ENCODE measurements at regions of chr1 and their contacts with region 1.

Region 1: GRCh38 chr1:51192213-51192843 is 43.7 kb upstream of the RNF11 start:
- DNase-seq: peak in 8 of 9 experiments; percentile 24 to 67 (median 56)
- ATAC-seq: no peak
- H3K4me3 ChIP-seq: no peak overlapping the region
- H3K4me3 Mint-ChIP-seq: no peak overlapping the region
- H3K27ac ChIP-seq: no peak overlapping the region
- H3K27ac Mint-ChIP-seq: no peak overlapping the region
- H3K4me1 ChIP-seq: no peaks in the 10 kb centered on the region
- H3K4me1 Mint-ChIP-seq: no peaks in the 10 kb centered on the region
- H3K27me3 ChIP-seq: no peaks in the 10 kb centered on the region
- H3K27me3 Mint-ChIP-seq: peaks cover 6% of the 10 kb centered on the region
- CTCF ChIP-seq: peak; percentile 82

Region 2: DNA sequence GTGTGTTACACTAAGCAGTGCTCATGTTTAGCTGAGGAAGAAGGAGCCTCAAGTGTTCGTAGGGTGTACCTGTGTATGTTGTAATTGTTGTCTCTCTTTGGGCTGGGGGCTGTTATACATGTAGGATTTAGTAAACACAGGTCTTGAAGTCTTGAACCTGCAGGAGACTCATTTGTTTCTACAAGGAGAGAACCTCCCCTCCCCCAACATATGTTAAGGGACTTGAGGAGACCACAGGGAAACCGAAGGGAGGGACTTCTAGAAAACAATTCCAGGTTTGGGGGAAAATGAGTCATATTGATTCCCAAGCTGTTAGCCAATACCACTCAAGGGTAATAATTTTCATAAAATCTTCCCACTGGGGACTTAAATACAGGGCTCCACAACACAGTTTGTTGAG is 1143.5 kb before region 1 on chr1:
- CTCF ChIA-PET with region 1: no interaction called
- POLR2A ChIA-PET with region 1: no interaction called
- intact Hi-C with region 1: no loop called
- DNase-seq: no peak
- ATAC-seq: no peak
- H3K4me3 ChIP-seq: no peak overlapping the region
- H3K4me3 Mint-ChIP-seq: no peak overlapping the region
- H3K27ac ChIP-seq: no peak overlapping the region
- H3K27ac Mint-ChIP-seq: no peak overlapping the region
- H3K4me1 ChIP-seq: no peaks in the 10 kb centered on the region
- H3K4me1 Mint-ChIP-seq: no peaks in the 10 kb centered on the region
- H3K27me3 ChIP-seq: peaks cover 0 to 3% of the 10 kb centered on the region in 2 experiments
- H3K27me3 Mint-ChIP-seq: peaks cover 36% of the 10 kb centered on the region
- CTCF ChIP-seq: no peak

Region 3: DNA sequence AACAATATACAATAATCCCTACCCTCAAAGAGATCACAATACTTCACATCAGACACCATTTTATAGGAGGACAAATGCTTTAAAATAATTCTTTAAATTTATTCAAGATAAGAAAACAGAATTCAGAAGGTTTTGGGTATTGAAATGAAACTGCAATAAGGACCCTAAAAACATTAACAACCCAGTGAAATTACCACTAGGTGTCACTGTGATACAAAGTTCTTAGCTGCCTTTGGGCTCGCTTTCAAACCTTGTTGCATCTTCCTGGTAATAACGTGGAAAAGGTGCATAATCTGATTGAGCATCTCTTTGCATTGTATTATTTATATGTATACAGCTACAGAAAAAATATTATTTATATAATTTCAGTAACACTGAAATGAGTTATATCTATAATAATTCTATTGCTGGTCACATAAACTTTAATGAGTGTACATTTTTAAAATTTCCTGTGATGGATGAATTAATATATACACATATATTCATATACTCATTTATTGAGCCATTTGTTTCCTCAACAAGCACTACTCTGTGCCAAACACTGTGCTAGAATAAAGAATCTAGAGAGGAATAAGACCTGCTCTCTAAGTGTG is 417.5 kb before region 1 on chr1:
- CTCF ChIA-PET with region 1: interaction called, 108 read pairs
- POLR2A ChIA-PET with region 1: no interaction called
- intact Hi-C with region 1: loop called (anchors 1 kb)
- DNase-seq: peak in 3 of 9 experiments; percentile 7 to 68 (median 55)
- ATAC-seq: no peak
- H3K4me3 ChIP-seq: no peak overlapping the region
- H3K4me3 Mint-ChIP-seq: no peak overlapping the region
- H3K27ac ChIP-seq: no peak overlapping the region
- H3K27ac Mint-ChIP-seq: no peak overlapping the region
- H3K4me1 ChIP-seq: no peaks in the 10 kb centered on the region
- H3K4me1 Mint-ChIP-seq: peaks cover 7% of the 10 kb centered on the region
- H3K27me3 ChIP-seq: no peaks in the 10 kb centered on the region
- H3K27me3 Mint-ChIP-seq: no peaks in the 10 kb centered on the region
- CTCF ChIP-seq: peak; percentile 83

Region 4: GRCh38 chr1:50929376-50929958 is 262.9 kb before region 1 on chr1:
- CTCF ChIA-PET with region 1: interaction called, 44 read pairs
- POLR2A ChIA-PET with region 1: no interaction called
- intact Hi-C with region 1: loop called in 1 of 2 experiments (anchors 1 kb)
- DNase-seq: peak in 2 of 9 experiments; percentile 30 to 50
- ATAC-seq: no peak
- H3K4me3 ChIP-seq: no peak overlapping the region
- H3K4me3 Mint-ChIP-seq: no peak overlapping the region
- H3K27ac ChIP-seq: no peak overlapping the region
- H3K27ac Mint-ChIP-seq: no peak overlapping the region
- H3K4me1 ChIP-seq: no peaks in the 10 kb centered on the region
- H3K4me1 Mint-ChIP-seq: peaks cover 29% of the 10 kb centered on the region
- H3K27me3 ChIP-seq: no peaks in the 10 kb centered on the region
- H3K27me3 Mint-ChIP-seq: no peaks in the 10 kb centered on the region
- CTCF ChIP-seq: peak; percentile 71

Region 5: GRCh38 chr1:51119331-51119730 is 73.0 kb before region 1 on chr1:
- CTCF ChIA-PET with region 1: no interaction called
- POLR2A ChIA-PET with region 1: no interaction called
- intact Hi-C with region 1: no loop called
- DNase-seq: no peak
- ATAC-seq: no peak
- H3K4me3 ChIP-seq: no peak overlapping the region
- H3K4me3 Mint-ChIP-seq: no peak overlapping the region
- H3K27ac ChIP-seq: no peak overlapping the region
- H3K27ac Mint-ChIP-seq: no peak overlapping the region
- H3K4me1 ChIP-seq: no peaks in the 10 kb centered on the region
- H3K4me1 Mint-ChIP-seq: no peaks in the 10 kb centered on the region
- H3K27me3 ChIP-seq: no peaks in the 10 kb centered on the region
- H3K27me3 Mint-ChIP-seq: peaks cover 10% of the 10 kb centered on the region
- CTCF ChIP-seq: no peak

Region 6: GRCh38 chr1:51175278-51175677 is 17.1 kb before region 1 on chr1:
- CTCF ChIA-PET with region 1: interaction called, 16 read pairs
- POLR2A ChIA-PET with region 1: no interaction called
- intact Hi-C with region 1: no loop called
- DNase-seq: peak in 1 of 9 experiments; percentile 15
- ATAC-seq: no peak
- H3K4me3 ChIP-seq: no peak overlapping the region
- H3K4me3 Mint-ChIP-seq: no peak overlapping the region
- H3K27ac ChIP-seq: no peak overlapping the region
- H3K27ac Mint-ChIP-seq: no peak overlapping the region
- H3K4me1 ChIP-seq: no peaks in the 10 kb centered on the region
- H3K4me1 Mint-ChIP-seq: peaks cover 5% of the 10 kb centered on the region
- H3K27me3 ChIP-seq: no peaks in the 10 kb centered on the region
- H3K27me3 Mint-ChIP-seq: peaks cover 34% of the 10 kb centered on the region
- CTCF ChIP-seq: no peak

Region 7: DNA sequence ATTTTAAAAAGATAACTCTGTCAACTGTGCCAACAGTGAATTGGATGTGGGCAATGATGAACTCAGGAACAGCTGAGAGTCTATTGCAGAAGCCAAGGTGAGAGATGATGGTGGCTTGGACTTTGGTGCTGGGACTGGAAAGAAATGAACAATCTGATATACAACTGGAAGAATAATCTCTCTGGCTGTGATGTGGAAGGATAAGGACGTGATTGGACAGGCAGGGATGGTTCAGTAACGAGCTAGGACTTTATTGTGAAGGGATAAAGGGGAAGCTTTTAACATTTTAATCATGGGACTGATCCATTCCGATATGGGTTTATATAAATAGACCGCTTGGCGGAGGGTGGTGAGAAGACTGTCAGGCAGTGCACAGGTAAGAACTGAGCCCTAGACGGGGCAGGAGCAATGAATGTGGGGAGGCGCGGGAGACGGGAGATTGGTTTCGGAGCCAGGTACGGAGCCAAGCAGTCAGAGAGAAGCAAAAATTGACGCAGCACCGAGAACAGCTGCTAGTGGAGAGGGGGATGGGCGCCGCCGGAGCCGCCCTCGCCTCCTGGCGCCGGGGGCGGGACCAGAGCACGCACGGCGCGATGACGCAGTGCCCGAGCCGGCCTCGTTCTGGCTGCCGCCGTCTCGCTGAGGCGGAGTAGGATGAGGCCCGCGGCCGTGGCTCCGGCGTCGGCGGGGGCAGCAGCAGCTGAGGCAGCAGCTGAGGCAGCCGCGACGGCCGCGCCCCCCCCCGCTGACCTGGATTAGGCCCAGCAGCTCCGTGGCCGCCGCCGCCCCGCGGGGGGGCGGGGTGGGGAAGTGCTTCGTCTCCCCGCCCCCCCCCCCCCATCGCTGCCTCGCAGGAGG is 43.6 kb after region 1 on chr1 and contains the start of gene RNF11:
- CTCF ChIA-PET with region 1: interaction called, 10 read pairs
- POLR2A ChIA-PET with region 1: interaction called, 4 read pairs
- intact Hi-C with region 1: loop called in 1 of 2 experiments (anchors 1 kb)
- DNase-seq: peak; percentile 86 to 97 (median 91)
- ATAC-seq: peak; percentile 92
- H3K4me3 ChIP-seq: peak within 1 kb of the TSS; percentile 79 to 90
- H3K4me3 Mint-ChIP-seq: peak within 1 kb of the TSS; percentile 98
- H3K27ac ChIP-seq: peak within 1 kb of the TSS; percentile 80 to 92
- H3K27ac Mint-ChIP-seq: peak within 1 kb of the TSS; percentile 99
- H3K4me1 ChIP-seq: peaks cover 37% of the 10 kb centered on the region
- H3K4me1 Mint-ChIP-seq: peaks cover 33% of the 10 kb centered on the region
- H3K27me3 ChIP-seq: no peaks in the 10 kb centered on the region
- H3K27me3 Mint-ChIP-seq: no peaks in the 10 kb centered on the region
- CTCF ChIP-seq: no peak
- total RNA-seq, gene RNF11: 95.9 to 103 TPM

Region 8: GRCh38 chr1:51330331-51331201 is 138.2 kb after region 1 on chr1 and contains the start of gene TTC39A:
- CTCF ChIA-PET with region 1: no interaction called
- POLR2A ChIA-PET with region 1: no interaction called
- intact Hi-C with region 1: no loop called
- DNase-seq: no peak
- ATAC-seq: no peak
- H3K4me3 ChIP-seq: no peak within 1 kb of the TSS
- H3K4me3 Mint-ChIP-seq: peak within 1 kb of the TSS; percentile 78
- H3K27ac ChIP-seq: no peak within 1 kb of the TSS
- H3K27ac Mint-ChIP-seq: no peak within 1 kb of the TSS
- H3K4me1 ChIP-seq: no peaks in the 10 kb centered on the region
- H3K4me1 Mint-ChIP-seq: peaks cover 8% of the 10 kb centered on the region
- H3K27me3 ChIP-seq: peaks cover 6 to 18% of the 10 kb centered on the region in 2 experiments
- H3K27me3 Mint-ChIP-seq: peaks cover 41% of the 10 kb centered on the region
- CTCF ChIP-seq: no peak
- total RNA-seq, gene TTC39A: not detected

Measured in CD8-positive, alpha-beta T cell (primary cell).